ENCODE measurements at regions of chr16 and their contacts with region 1.

Region 1: GRCh38 chr16:25950586-25951281 is 259.0 kb downstream of the HS3ST4 start:
- DNase-seq: no peak
- H3K4me3 ChIP-seq: no peak overlapping the region
- H3K27ac ChIP-seq: no peak overlapping the region
- H3K4me1 ChIP-seq: no peaks in the 10 kb centered on the region
- H3K27me3 ChIP-seq: no peaks in the 10 kb centered on the region
- CTCF ChIP-seq: no peak
- POLR2A ChIP-seq: no peak

Region 2: GRCh38 chr16:26026709-26027450 is 76.1 kb after region 1 on chr16:
- intact Hi-C with region 1: no loop called
- DNase-seq: no peak
- H3K4me3 ChIP-seq: no peak overlapping the region
- H3K27ac ChIP-seq: no peak overlapping the region
- H3K4me1 ChIP-seq: no peaks in the 10 kb centered on the region
- H3K27me3 ChIP-seq: no peaks in the 10 kb centered on the region
- CTCF ChIP-seq: no peak
- POLR2A ChIP-seq: no peak

Region 3: DNA sequence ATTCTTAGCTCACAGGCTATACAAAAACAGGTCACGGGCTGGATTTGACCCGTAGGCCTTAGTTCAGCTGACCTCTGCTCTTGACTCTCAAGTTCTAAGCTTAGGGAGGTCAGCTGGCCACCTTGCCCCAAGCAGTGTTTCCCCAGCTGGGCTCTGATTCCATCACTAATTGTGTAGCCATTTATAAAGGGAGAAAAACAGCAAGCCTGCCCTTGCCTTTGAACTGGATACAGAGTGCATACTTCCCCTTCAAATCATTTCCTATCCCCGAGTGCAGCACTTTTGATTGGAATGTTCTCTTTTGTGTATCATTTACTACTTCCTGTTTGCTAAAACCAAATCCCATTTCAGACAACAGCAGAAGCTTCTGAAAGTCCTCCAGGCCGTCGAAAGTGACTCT is 1752.8 kb after region 1 on chr16:
- intact Hi-C with region 1: loop called (anchors 5 kb)
- DNase-seq: no peak
- H3K4me3 ChIP-seq: no peak overlapping the region
- H3K27ac ChIP-seq: no peak overlapping the region
- H3K4me1 ChIP-seq: no peaks in the 10 kb centered on the region
- H3K27me3 ChIP-seq: no peaks in the 10 kb centered on the region
- CTCF ChIP-seq: no peak
- POLR2A ChIP-seq: no peak